ENCODE measurements at regions of chr15 and their contacts with region 1.

Region 1: GRCh38 chr15:42575188-42576039 is at the start of gene STARD9:
- DNase-seq: peak; percentile 99
- ATAC-seq: peak; percentile 97
- H3K4me3 ChIP-seq: peak within 1 kb of the TSS; percentile 59 to 72
- H3K27ac ChIP-seq: peak within 1 kb of the TSS; percentile 34 to 77
- H3K4me1 ChIP-seq: peaks cover 0 to 2% of the 10 kb centered on the region in 2 donors
- H3K27me3 ChIP-seq: no peaks in the 10 kb centered on the region
- total RNA-seq, gene STARD9: 38.7 to 65.8 TPM

Region 2: GRCh38 chr15:42490671-42491544 is 84.5 kb before region 1 on chr15 and contains the start of gene ZNF106:
- intact Hi-C with region 1: loop called in 1 of 2 experiments (anchors 5 kb)
- DNase-seq: peak; percentile 91 to 95
- ATAC-seq: peak; percentile 91
- H3K4me3 ChIP-seq: peak within 1 kb of the TSS; percentile 81 to 88
- H3K27ac ChIP-seq: peak within 1 kb of the TSS; percentile 48 to 100
- H3K4me1 ChIP-seq: no peaks in the 10 kb centered on the region
- H3K27me3 ChIP-seq: no peaks in the 10 kb centered on the region
- total RNA-seq, gene ZNF106: 76.9 to 78.8 TPM

Region 3: GRCh38 chr15:42619656-42620371 is 44.4 kb after region 1 on chr15:
- intact Hi-C with region 1: loop called in 1 of 2 experiments (anchors 5 kb)
- DNase-seq: no peak
- ATAC-seq: no peak
- H3K4me3 ChIP-seq: no peak overlapping the region
- H3K27ac ChIP-seq: no peak overlapping the region
- H3K4me1 ChIP-seq: no peaks in the 10 kb centered on the region
- H3K27me3 ChIP-seq: no peaks in the 10 kb centered on the region

Measured in aorta (tissue), 5 donors.